HepG2 (cell line): ENCODE measurements at regions of chr15 and their contacts with region 1.

Region 1: GRCh38 chr15:49235446-49236124 is 65.5 kb downstream of the GALK2 start:
- DNase-seq: peak; percentile 37
- ATAC-seq: peak; percentile 77
- H3K4me3 ChIP-seq: no peak overlapping the region
- H3K27ac ChIP-seq: no peak overlapping the region
- H3K4me1 ChIP-seq: peaks cover 18% of the 10 kb centered on the region
- H3K27me3 ChIP-seq: no peaks in the 10 kb centered on the region
- CTCF ChIP-seq: peak; percentile 77
- EP300 ChIP-seq: no peak
- POLR2A ChIP-seq: no peak
- RAD21 ChIP-seq: peak; percentile 51; the same call in 1 of the 2 replicates

Region 2: DNA sequence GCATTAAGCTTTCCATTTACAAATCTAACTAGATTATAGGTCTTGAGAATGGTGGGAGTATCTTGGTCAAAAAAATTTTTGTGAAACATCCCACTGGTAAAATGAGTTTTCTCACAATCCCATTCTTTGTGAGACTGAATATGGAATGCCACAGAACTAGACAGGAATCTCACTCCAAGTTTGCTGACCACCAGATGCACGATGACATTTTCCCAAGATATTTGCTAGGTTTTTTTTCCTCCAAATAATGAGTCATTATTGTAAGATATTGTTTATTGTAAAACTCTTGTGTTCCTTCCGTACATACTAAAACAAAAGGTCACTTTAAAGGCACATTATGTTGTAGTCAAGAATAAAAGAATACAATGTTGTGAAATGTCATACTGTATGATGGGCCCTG is 134.0 kb before region 1 on chr15:
- CTCF ChIA-PET with region 1: no interaction called
- POLR2A ChIA-PET with region 1: no interaction called
- in situ Hi-C with region 1: no loop called
- intact Hi-C with region 1: no loop called
- DNase-seq: no peak
- ATAC-seq: no peak
- H3K4me3 ChIP-seq: no peak overlapping the region
- H3K27ac ChIP-seq: no peak overlapping the region
- H3K4me1 ChIP-seq: peaks cover 10% of the 10 kb centered on the region
- H3K27me3 ChIP-seq: no peaks in the 10 kb centered on the region
- CTCF ChIP-seq: no peak
- EP300 ChIP-seq: no peak
- POLR2A ChIP-seq: no peak
- RAD21 ChIP-seq: no peak

Region 3: GRCh38 chr15:49421991-49422390 is 186.4 kb after region 1 on chr15:
- CTCF ChIA-PET with region 1: interaction called, 22 read pairs
- POLR2A ChIA-PET with region 1: no interaction called
- in situ Hi-C with region 1: loop called (anchors 5 kb)
- intact Hi-C with region 1: loop called (anchors 1 kb)
- DNase-seq: peak; percentile 53
- ATAC-seq: no peak; the same call in 2 of the 3 replicates
- H3K4me3 ChIP-seq: no peak overlapping the region
- H3K27ac ChIP-seq: no peak overlapping the region
- H3K4me1 ChIP-seq: no peaks in the 10 kb centered on the region
- H3K27me3 ChIP-seq: no peaks in the 10 kb centered on the region
- CTCF ChIP-seq: peak; percentile 72
- EP300 ChIP-seq: no peak
- POLR2A ChIP-seq: no peak
- RAD21 ChIP-seq: peak; percentile 39; the same call in 1 of the 2 replicates

Region 4: GRCh38 chr15:49435201-49435600 is 199.6 kb after region 1 on chr15:
- CTCF ChIA-PET with region 1: no interaction called
- POLR2A ChIA-PET with region 1: no interaction called
- in situ Hi-C with region 1: no loop called
- intact Hi-C with region 1: no loop called
- DNase-seq: no peak
- ATAC-seq: no peak
- H3K4me3 ChIP-seq: no peak overlapping the region
- H3K27ac ChIP-seq: no peak overlapping the region
- H3K4me1 ChIP-seq: no peaks in the 10 kb centered on the region
- H3K27me3 ChIP-seq: no peaks in the 10 kb centered on the region
- CTCF ChIP-seq: no peak
- EP300 ChIP-seq: no peak
- POLR2A ChIP-seq: no peak
- RAD21 ChIP-seq: no peak

Region 5: GRCh38 chr15:50003786-50004334 is 768.3 kb after region 1 on chr15:
- CTCF ChIA-PET with region 1: no interaction called
- POLR2A ChIA-PET with region 1: no interaction called
- in situ Hi-C with region 1: loop called (anchors 25 kb)
- intact Hi-C with region 1: loop called (anchors 1 kb)
- DNase-seq: peak; percentile 78
- ATAC-seq: peak; percentile 100
- H3K4me3 ChIP-seq: no peak overlapping the region
- H3K27ac ChIP-seq: no peak overlapping the region
- H3K4me1 ChIP-seq: no peaks in the 10 kb centered on the region
- H3K27me3 ChIP-seq: no peaks in the 10 kb centered on the region
- CTCF ChIP-seq: peak; percentile 91
- EP300 ChIP-seq: peak in 1 of 2 experiments; percentile 6; a peak in 1 of 4 replicates
- POLR2A ChIP-seq: no peak
- RAD21 ChIP-seq: peak; percentile 68

Region 6: DNA sequence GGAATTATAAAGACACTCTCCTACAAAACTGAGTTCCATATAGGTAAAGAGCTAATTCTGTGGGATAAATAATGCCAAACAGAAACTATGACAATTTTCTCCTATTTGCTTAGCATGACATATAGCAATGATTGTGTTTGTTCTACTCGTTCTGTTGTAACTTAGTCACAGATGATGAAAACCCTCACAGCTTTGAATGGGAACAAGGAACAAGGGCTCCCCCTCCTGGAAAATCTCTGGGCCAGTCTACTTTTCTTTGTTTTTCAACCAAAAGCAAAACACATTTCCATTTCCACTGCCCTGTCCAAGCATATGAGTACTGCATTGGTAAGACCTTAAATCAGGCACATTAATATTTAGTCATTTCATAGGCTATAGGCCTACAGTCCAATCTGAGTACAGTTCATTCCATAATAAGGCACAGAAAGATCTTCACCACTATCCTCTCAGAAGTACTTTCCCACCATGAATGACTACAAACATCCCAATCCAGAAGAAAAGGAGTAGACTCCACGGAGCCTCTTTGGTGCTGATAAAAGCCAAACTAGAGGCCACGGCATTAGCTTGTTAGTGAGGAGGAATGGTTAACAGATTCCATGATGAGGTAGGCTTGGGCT is 816.3 kb after region 1 on chr15:
- CTCF ChIA-PET with region 1: no interaction called
- POLR2A ChIA-PET with region 1: no interaction called
- in situ Hi-C with region 1: no loop called
- intact Hi-C with region 1: loop called (anchors 2 kb)
- DNase-seq: peak; percentile 58
- ATAC-seq: peak; percentile 87
- H3K4me3 ChIP-seq: no peak overlapping the region
- H3K27ac ChIP-seq: no peak overlapping the region
- H3K4me1 ChIP-seq: no peaks in the 10 kb centered on the region
- H3K27me3 ChIP-seq: no peaks in the 10 kb centered on the region
- CTCF ChIP-seq: peak; percentile 62
- EP300 ChIP-seq: no peak
- POLR2A ChIP-seq: no peak
- RAD21 ChIP-seq: no peak

Region 7: DNA sequence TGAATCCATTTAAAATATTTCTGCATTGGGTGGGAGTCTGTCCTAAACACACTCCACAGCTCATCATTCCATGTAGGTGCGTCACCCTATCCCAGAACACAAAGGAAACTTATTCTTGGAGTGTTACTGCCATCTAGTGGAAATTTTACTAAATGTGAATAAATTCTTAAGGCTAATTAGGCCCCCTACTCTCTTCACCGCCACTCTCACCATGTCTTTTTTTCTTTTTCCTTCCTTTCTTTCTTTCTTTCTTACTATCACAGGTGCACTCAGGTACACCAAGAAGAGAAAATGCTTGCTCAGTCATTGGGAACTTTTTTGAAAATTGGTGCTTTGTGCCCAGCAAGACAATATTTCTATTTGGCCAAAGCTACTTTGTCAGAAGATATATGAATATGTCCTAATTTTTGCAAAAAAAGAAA is 909.9 kb after region 1 on chr15:
- CTCF ChIA-PET with region 1: no interaction called
- POLR2A ChIA-PET with region 1: no interaction called
- in situ Hi-C with region 1: no loop called
- intact Hi-C with region 1: loop called (anchors 5 kb)
- DNase-seq: peak; percentile 78
- ATAC-seq: peak; percentile 89
- H3K4me3 ChIP-seq: peak overlapping the region in 2 of 3 experiments; percentile 31 to 36; a peak in 2 of 6 replicates
- H3K27ac ChIP-seq: no peak overlapping the region
- H3K4me1 ChIP-seq: peaks cover 16% of the 10 kb centered on the region
- H3K27me3 ChIP-seq: no peaks in the 10 kb centered on the region
- CTCF ChIP-seq: peak; percentile 75
- EP300 ChIP-seq: no peak
- POLR2A ChIP-seq: no peak
- RAD21 ChIP-seq: peak; percentile 38; the same call in 1 of the 2 replicates